Activated CD4-positive, alpha-beta memory T cell treated with anti-CD3 and anti-CD28 coated beads for 36 hours (primary cell): ENCODE measurements at regions of chr1 and their contacts with region 1.

Region 1: GRCh38 chr1:21270086-21270689 is 20.1 kb downstream of the ECE1 start:
- DNase-seq: peak; percentile 90
- H3K4me3 Mint-ChIP-seq: no peak overlapping the region
- H3K27ac Mint-ChIP-seq: no peak overlapping the region
- H3K4me1 Mint-ChIP-seq: peaks cover 23% of the 10 kb centered on the region
- H3K27me3 Mint-ChIP-seq: no peaks in the 10 kb centered on the region

Region 2: DNA sequence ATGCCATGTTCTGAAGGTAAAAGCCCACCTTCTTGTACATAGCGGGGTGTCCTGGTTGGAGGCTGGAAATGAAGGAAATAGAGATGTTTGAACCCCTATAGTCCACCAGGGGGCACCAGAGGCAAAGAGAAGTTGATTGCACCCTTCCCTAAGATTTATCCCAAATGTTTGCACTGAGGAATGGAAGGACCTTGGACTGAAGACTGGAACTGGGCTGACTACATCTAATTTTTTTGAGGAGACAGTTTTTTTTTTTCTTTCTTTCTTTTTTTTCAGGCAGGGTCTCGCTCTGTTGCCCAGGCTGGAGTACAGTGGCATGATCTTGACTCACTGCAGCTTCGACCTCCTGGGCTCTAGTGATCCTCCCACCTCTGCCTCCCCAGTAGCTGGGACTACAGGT is 38.1 kb before region 1 on chr1:
- CTCF ChIA-PET with region 1: interaction called, 12 read pairs
- POLR2A ChIA-PET with region 1: no interaction called
- intact Hi-C with region 1: no loop called
- DNase-seq: no peak
- H3K4me3 Mint-ChIP-seq: no peak overlapping the region
- H3K27ac Mint-ChIP-seq: no peak overlapping the region
- H3K4me1 Mint-ChIP-seq: no peaks in the 10 kb centered on the region
- H3K27me3 Mint-ChIP-seq: no peaks in the 10 kb centered on the region

Region 3: DNA sequence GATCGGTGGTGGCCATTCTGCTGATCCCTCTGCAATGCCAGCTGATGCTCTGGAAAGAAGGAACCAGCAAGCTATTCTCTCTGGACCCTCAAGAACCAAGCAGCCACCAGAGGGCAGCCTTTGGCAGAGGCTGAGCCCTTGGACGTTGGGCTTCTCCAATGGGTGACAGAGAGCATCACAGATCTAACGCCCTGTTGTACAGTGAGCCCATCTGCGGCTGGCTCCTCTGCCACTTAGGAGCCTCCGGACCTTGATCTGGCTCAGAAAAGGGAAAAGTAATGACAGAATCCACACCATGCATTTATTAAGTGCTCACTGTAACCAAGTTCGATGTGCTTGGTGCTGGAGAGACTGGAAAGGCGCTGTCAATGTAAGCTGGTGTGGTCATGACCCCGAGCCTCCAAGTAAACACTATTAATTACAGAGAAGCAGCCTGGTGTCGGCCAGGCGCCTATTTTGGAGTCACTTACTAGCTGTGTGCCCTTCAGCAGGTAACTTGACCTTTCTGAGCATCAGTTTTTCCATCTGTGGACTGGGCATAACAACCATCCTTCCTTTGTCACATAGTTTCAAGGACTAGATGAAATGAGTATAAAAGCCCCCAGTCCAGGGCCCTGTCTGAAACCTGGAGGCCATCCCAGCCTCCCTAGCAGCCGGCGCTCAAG is 14.8 kb before region 1 on chr1:
- CTCF ChIA-PET with region 1: interaction called, 208 read pairs
- POLR2A ChIA-PET with region 1: interaction called, 5 read pairs
- intact Hi-C with region 1: loop called (anchors 2 kb)
- DNase-seq: peak; percentile 88
- H3K4me3 Mint-ChIP-seq: no peak overlapping the region
- H3K27ac Mint-ChIP-seq: peak overlapping the region; percentile 59
- H3K4me1 Mint-ChIP-seq: peaks cover 48% of the 10 kb centered on the region
- H3K27me3 Mint-ChIP-seq: no peaks in the 10 kb centered on the region

Region 4: DNA sequence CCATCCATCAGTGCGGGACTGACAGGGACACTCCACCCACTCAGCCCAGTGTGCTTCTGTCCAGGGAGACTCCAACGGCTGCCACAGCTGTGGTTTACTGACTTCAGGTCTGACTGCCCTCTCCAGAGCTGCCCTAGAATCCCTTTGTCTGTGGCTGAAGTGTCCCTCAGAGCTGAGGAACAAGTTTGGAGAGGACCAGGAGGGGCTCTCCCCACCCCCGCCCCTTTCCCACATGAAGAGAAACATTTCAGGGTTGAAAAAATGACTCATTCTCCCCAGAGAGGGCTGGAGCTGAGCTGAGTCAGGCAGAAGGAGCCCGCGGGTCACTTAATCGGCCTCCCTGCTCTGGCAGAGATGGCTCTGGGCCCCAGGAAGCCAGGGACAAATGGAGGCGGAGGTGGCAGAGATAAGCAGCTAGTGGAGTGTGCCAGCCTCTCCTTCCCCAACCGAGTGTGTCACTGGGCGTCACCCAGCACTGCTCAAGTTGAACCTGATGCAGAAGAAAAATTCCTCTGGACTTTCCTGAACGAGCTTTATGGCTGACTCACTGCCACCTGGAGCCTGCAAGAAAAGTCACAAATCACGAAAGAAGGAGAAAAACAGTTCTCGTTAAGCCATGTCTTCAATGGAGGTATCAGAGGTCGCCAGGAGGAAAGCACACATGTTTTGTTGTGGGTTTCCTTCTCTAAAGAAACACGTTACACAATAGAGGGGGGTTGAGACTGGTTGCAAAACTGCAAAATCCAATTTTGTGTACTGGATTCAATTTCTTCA is 54.4 kb after region 1 on chr1:
- CTCF ChIA-PET with region 1: interaction called, 53 read pairs
- POLR2A ChIA-PET with region 1: no interaction called
- intact Hi-C with region 1: no loop called
- DNase-seq: peak; percentile 90
- H3K4me3 Mint-ChIP-seq: peak overlapping the region; percentile 45
- H3K27ac Mint-ChIP-seq: peak overlapping the region; percentile 90
- H3K4me1 Mint-ChIP-seq: peaks cover 81% of the 10 kb centered on the region
- H3K27me3 Mint-ChIP-seq: no peaks in the 10 kb centered on the region

Region 5: GRCh38 chr1:21344750-21345443 is 74.7 kb after region 1 on chr1:
- CTCF ChIA-PET with region 1: interaction called, 41 read pairs
- POLR2A ChIA-PET with region 1: interaction called, 5 read pairs
- intact Hi-C with region 1: no loop called
- DNase-seq: peak; percentile 45
- H3K4me3 Mint-ChIP-seq: peak overlapping the region; percentile 91
- H3K27ac Mint-ChIP-seq: peak overlapping the region; percentile 94
- H3K4me1 Mint-ChIP-seq: peaks cover 40% of the 10 kb centered on the region
- H3K27me3 Mint-ChIP-seq: no peaks in the 10 kb centered on the region